Head of caudate nucleus (tissue), 42 donors: ENCODE measurements at regions of chrX and their contacts with region 1.

Region 1: DNA sequence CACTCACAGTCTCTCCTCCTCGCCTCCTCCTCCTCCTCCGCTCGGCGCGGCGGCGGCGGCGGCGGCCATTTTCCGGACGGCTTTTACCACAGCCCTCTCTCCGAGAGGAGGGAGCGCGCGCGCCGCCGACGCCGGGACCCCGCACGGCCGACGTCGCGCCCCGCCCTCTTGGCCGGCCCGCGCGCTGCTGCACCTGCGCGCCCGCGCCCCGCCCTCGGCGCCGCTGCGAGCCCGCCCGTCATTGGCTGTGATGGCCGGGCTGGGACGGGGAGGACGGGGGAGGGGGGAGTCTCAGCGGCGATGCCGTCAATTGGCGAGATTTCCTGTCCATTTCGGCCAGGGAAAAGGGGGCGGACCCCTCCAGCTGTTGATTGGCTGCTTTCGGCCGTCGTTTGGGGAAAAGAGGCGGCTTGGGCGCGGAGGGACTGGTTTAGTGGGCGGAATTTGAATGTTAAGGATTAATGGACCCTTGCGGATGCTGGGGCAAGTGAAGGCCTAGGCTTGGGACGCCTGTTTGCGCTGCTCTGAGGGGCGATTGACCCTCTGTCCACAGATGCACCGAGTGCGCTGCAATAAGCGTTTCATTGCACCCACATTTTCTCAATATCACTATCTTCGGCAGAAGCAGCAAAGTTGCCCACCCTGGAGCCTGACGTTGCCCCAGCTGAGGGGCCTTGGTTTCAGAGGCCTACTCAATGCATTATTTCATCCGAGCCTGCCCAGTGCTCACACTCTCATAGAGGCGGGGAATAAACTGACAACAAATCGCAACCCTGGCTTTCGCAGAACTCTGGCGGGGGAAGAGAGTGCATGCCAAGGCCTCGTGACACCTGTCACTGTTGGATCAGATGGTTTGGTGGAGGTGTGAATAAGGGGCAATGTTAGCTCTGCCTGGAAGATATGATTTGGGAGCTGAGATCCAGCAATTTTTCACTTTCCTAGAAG is at the start of gene MECP2:
- DNase-seq: peak; percentile 80 to 97 (median 92)

Region 2: DNA sequence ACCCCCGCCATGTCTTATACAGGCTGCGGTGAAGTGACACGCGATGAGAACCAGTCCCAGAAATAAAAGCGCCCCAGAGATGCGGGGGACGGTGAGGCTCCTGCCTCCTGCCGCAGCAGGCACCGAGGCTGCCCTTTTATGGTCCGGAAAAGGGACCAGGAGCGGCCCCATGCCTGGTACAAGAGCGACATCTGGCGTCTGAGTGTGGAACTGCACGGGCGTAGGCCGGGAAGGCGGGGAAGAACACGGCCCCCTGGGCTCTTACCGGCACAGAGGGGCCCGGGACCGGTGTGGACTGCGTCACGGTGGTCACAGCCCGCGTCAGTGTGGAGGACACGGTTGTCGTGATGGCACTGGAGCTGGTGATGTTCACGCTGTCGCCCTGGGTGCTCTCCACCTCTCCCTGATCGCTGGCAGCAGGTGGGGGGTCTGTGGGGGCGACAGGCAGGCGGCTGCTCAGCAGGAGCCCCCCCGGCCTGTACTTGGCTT is 144.5 kb before region 1 on chrX:
- intact Hi-C with region 1: no loop called
- DNase-seq: peak; percentile 42 to 88 (median 78)

Region 3: DNA sequence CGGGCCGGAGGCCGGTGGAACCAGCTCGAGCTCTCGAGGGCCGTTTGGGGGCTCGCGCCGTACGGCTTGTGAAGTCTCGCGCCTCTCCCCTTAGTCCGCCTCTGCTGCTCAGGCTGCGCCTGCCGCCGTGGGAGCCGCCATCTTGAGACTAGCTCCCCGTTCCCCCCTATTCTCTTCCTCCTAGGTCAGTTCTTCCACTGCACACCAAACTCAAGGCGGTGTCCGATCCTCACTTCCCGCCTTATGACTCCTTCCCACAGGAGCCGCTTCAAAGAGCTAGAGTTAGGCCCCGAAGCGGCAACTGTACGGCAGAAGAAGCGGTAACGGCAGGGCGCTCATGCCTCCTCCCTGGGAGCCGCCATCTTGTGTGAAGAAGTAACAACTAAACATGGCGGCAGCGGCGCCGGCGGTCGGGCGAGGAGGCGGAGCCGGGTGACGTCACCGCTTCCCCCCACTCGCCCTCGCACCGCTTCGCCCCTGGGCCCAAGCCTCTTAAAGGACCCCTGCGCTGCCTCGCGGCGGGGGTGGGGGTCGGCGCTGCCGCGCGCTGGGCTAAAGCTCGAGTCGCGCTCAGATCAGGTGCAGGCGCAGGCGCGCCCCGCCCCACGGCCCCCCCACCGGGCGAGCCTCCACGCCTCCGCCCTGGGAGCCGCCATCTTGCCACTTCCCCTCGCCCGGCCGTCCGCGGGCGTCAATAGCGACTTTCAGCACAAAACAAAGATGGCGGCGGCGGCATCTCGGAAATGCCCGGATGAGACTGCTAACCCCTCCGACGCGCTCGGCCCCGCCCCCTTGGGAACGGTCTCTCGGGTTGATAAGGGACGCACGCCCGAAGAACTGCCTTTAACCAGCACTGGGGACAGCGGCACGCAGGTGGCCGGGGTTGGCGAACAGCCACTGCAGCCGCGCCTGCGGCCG is 126.2 kb before region 1 on chrX and contains the start of gene HCFC1:
- intact Hi-C with region 1: loop called (anchors 5 kb)
- DNase-seq: peak; percentile 71 to 95 (median 90)

Region 4: GRCh38 chrX:154019633-154020528 is 78.0 kb before region 1 on chrX and contains the start of gene IRAK1:
- intact Hi-C with region 1: loop called (anchors 10 kb)
- DNase-seq: peak in 38 of 42 donors; percentile 24 to 78 (median 58)

Region 5: GRCh38 chrX:154051201-154051810 is 46.6 kb before region 1 on chrX:
- intact Hi-C with region 1: no loop called
- DNase-seq: peak; percentile 27 to 88 (median 72)